Posterior vena cava (tissue), 2 donors: ENCODE measurements at regions of chrX and their contacts with region 1.

Region 1: GRCh38 chrX:57266871-57267707 is 19.4 kb upstream of the FAAH2 start:
- DNase-seq: no peak

Region 2: DNA sequence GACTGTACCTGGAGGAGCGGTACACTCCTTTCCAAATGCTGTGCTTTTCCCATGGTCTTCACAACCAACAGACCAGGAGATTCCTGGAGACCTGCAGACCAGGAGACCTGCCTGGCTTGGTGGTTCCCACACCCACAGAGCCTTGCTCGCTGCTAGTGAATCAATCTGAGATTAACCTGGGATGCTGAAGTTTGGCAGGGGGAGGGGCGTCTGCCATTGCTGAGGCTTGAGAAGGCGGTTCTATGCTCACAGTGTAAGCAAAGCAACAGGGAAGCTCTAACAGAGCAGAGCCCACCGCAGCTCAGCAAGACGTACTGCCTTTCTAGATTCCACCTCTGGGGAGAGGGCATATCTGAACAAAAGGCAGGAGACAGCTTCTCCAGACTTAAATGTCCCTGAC is 15.1 kb before region 1 on chrX:
- intact Hi-C with region 1: loop called in 1 of 2 experiments (anchors 2 kb)
- DNase-seq: peak; percentile 53

Region 3: DNA sequence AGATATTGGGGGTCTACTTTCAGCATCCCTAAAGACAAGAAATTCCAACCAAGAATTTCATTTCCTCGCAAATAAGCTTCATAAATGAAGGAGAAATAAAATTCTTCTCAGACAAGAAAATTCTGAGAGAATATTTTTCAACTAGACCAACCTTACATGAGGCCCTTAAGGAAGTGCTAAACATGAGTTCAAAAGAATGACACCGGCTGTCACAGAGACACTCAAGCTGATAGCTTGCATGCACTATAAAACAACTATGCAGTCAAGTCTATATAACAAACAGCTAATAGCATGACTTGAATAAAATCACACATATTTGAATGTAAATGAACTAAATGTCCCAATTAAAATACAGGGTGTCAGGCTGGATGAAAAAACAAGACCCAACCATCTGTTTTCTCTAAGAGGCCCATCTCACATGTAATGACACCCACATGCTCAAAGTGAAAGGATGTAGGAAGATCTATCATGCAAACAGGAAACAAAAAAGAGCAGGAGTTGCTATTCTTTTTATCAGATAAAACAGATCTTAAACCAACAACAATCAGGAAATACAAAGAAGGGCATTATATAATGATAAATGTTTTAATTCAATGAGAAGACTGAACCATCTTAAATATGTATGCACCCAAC is 46.6 kb after region 1 on chrX:
- intact Hi-C with region 1: no loop called
- DNase-seq: no peak